ENCODE measurements at regions of chr20 and their contacts with region 1.

Region 1: GRCh38 chr20:52150440-52151258 is 40.9 kb downstream of the ZFP64 start:
- DNase-seq: peak; percentile 65
- H3K4me3 ChIP-seq: no peak overlapping the region
- H3K27ac ChIP-seq: no peak overlapping the region
- H3K4me1 ChIP-seq: no peaks in the 10 kb centered on the region
- H3K27me3 ChIP-seq: no peaks in the 10 kb centered on the region
- CTCF ChIP-seq: peak; percentile 85
- EP300 ChIP-seq: no peak
- RAD21 ChIP-seq: peak; percentile 75

Region 2: DNA sequence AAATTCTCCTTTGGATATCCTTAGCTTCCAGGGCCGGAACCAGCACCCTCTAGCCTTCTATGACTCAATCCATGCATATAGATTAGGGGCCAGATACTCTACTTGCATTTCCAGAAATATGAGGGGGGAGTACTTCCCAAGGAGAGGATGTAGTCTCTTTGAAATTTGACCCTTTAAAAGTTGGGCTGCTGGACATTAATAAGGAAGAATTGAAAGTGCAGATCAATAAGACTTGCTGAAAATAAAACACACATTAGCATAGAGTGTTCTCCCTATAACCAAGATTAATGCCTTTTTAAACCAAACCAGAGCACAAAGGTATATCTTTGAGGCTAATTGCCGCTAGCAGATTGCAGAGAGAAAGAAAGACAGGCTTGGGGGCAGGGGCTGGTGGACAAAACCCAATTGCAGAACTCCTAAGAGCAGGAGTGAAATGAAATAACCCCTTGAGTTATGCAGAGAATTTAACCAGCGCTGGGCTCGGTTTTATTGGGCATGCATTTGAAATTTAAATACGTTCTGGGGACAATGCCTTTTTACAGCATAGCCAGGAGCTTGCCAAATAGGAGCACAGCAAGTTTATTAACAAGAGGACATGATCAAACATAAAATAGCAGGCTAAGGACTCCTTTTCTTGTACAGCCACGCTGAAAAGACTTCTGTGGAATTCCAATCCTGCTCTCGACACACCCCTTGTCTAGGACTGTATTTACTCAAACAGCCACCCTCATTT is 240.2 kb before region 1 on chr20:
- CTCF ChIA-PET with region 1: no interaction called
- POLR2A ChIA-PET with region 1: no interaction called
- DNase-seq: peak; percentile 36
- H3K4me3 ChIP-seq: no peak overlapping the region
- H3K27ac ChIP-seq: peak overlapping the region in 1 of 2 experiments; percentile 41; a peak in 1 of 4 replicates
- H3K4me1 ChIP-seq: peaks cover 12 to 17% of the 10 kb centered on the region in 2 experiments
- H3K27me3 ChIP-seq: no peaks in the 10 kb centered on the region
- CTCF ChIP-seq: no peak
- EP300 ChIP-seq: no peak
- RAD21 ChIP-seq: no peak

Region 3: GRCh38 chr20:52139986-52140385 is 10.7 kb before region 1 on chr20:
- CTCF ChIA-PET with region 1: interaction called, 10 read pairs
- POLR2A ChIA-PET with region 1: no interaction called
- DNase-seq: no peak
- H3K4me3 ChIP-seq: no peak overlapping the region
- H3K27ac ChIP-seq: no peak overlapping the region
- H3K4me1 ChIP-seq: no peaks in the 10 kb centered on the region
- H3K27me3 ChIP-seq: no peaks in the 10 kb centered on the region
- CTCF ChIP-seq: no peak
- EP300 ChIP-seq: no peak
- RAD21 ChIP-seq: no peak

Region 4: DNA sequence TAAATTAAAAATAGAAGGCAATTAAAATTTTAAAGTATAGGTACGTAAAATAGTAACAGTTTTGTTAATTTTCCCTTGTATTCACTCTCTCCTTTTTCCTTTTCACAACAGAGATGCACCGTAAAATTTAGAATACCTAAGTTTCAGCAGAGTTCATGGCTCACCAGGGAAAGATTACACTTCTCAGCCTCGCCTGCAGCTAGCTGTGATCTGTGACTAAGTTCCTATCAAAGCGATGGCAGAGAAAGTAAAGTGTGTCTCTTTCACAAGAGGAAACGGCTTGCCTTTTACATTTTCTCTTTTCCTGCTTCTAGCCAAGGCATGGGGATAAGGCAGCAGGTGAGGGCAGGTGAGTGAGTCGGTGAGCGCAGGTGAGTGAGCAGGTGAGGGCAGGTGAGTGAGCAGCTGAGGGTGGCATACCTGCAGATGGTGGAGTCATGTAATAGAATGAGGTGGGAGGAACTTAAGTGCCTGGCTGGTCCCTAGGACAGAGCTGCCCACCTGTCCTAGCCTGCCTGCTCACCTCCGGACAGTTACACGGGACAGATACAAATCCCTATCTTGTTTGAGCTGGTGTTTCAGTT is 10.1 kb after region 1 on chr20:
- CTCF ChIA-PET with region 1: interaction called, 13 read pairs
- POLR2A ChIA-PET with region 1: no interaction called
- DNase-seq: no peak
- H3K4me3 ChIP-seq: no peak overlapping the region
- H3K27ac ChIP-seq: no peak overlapping the region
- H3K4me1 ChIP-seq: no peaks in the 10 kb centered on the region
- H3K27me3 ChIP-seq: no peaks in the 10 kb centered on the region
- CTCF ChIP-seq: no peak
- EP300 ChIP-seq: no peak
- RAD21 ChIP-seq: no peak

Region 5: GRCh38 chr20:52295556-52295955 is 144.9 kb after region 1 on chr20:
- CTCF ChIA-PET with region 1: no interaction called
- POLR2A ChIA-PET with region 1: no interaction called
- DNase-seq: no peak
- H3K4me3 ChIP-seq: no peak overlapping the region
- H3K27ac ChIP-seq: no peak overlapping the region
- H3K4me1 ChIP-seq: peaks cover 2 to 4% of the 10 kb centered on the region in 2 experiments; a peak in 2 of 4 replicates
- H3K27me3 ChIP-seq: no peaks in the 10 kb centered on the region
- CTCF ChIP-seq: no peak
- EP300 ChIP-seq: no peak
- RAD21 ChIP-seq: no peak